Brain microvascular endothelial cell (primary cell): ENCODE measurements at regions of chr13 and their contacts with region 1.

Region 1: DNA sequence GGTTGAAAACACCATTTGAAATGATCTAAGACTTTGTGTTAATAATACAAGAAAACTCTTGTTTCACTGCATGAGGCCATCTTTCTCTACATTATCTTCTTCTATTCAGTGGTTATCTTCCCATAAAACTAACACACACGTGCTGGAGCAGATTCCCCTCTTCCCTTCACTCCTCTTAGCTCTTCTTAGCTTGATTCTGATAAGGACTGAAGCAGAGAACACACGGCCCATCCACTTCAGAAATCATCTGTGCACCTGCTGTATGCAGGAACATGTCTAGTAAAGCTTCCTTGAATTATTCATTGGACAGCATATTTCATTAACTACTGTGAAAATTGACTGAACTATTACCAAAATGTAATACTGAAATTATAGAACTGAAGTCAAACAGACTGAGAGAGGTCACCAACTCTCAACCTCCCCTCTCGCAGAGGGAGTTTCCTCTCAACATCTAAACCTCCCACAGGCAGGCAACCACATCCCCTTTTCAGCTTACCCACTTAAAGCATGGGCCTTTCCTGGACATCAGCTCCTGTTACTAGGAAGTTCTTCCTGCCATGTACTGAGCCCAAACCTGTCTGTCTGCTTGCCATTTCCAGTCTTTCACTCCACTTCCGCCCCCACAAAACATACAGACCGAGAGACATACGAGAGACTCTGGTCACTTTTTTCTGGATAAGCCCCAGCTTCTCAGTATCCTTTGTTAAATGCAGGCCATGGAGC is 113.9 kb downstream of the CRYL1 start:
- DNase-seq: no peak
- H3K4me3 ChIP-seq: no peak overlapping the region
- H3K27ac ChIP-seq: no peak overlapping the region
- H3K27me3 ChIP-seq: peaks cover 20% of the 10 kb centered on the region
- CTCF ChIP-seq: no peak

Region 2: GRCh38 chr13:20182231-20182846 is 229.5 kb before region 1 on chr13:
- in situ Hi-C with region 1: loop called (anchors 25 kb)
- DNase-seq: peak; percentile 38
- H3K4me3 ChIP-seq: no peak overlapping the region
- H3K27ac ChIP-seq: no peak overlapping the region
- H3K27me3 ChIP-seq: peaks cover 30% of the 10 kb centered on the region
- CTCF ChIP-seq: peak; percentile 92